Aorta (tissue), 5 donors: ENCODE measurements at regions of chr10 and their contacts with region 1.

Region 1: DNA sequence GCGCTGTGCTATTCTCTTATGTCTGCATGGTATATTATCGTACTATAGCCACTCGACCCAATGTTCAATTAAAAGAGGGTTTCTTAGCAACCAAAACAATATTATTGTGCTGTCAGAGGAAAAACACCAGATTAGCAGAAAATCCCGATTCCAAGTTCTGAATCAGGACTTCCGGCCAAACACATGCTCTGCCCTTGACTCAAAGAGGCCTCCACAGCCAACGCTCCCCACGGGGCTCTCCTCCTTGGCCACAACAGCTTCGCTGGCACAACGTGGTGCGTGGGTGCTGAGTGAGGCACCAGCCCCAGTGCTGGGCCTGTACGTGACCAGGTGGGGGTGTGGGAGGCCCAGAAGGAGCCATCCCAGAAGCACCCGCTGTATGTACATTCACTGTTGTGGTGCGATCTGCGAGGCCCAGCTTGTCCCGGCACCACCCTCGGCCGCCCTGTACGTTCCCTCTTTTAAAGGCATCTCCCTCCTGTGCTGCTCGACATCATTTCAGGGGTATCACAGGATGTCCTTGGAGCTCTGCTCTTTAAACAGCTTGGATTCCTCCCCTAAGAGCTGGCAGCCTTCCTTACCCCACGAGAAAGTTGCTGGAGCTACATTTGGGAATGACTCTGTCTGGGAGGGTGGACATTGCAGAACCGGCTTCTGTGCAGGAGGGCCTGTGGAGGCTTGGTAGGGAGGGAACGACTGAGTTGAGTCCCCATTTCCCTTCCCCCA is 736.2 kb downstream of the PARD3 start:
- DNase-seq: peak; percentile 92 to 96
- ATAC-seq: peak; percentile 87
- H3K4me3 ChIP-seq: no peak overlapping the region
- H3K27ac ChIP-seq: peak overlapping the region in 1 of 2 donors; percentile 73
- H3K4me1 ChIP-seq: peaks cover 0 to 2% of the 10 kb centered on the region in 2 donors
- H3K27me3 ChIP-seq: no peaks in the 10 kb centered on the region

Region 2: GRCh38 chr10:34010891-34011290 is 68.0 kb before region 1 on chr10:
- intact Hi-C with region 1: no loop called
- DNase-seq: no peak
- ATAC-seq: no peak
- H3K4me3 ChIP-seq: no peak overlapping the region
- H3K27ac ChIP-seq: no peak overlapping the region
- H3K4me1 ChIP-seq: no peaks in the 10 kb centered on the region
- H3K27me3 ChIP-seq: no peaks in the 10 kb centered on the region

Region 3: GRCh38 chr10:34139559-34139958 is 60.7 kb after region 1 on chr10:
- intact Hi-C with region 1: no loop called
- DNase-seq: no peak
- ATAC-seq: no peak
- H3K4me3 ChIP-seq: no peak overlapping the region
- H3K27ac ChIP-seq: no peak overlapping the region
- H3K4me1 ChIP-seq: no peaks in the 10 kb centered on the region
- H3K27me3 ChIP-seq: no peaks in the 10 kb centered on the region

Region 4: GRCh38 chr10:34150103-34150502 is 71.2 kb after region 1 on chr10:
- intact Hi-C with region 1: no loop called
- DNase-seq: no peak
- ATAC-seq: no peak
- H3K4me3 ChIP-seq: no peak overlapping the region
- H3K27ac ChIP-seq: no peak overlapping the region
- H3K4me1 ChIP-seq: peaks cover 4% of the 10 kb centered on the region in 2 donors
- H3K27me3 ChIP-seq: no peaks in the 10 kb centered on the region

Region 5: DNA sequence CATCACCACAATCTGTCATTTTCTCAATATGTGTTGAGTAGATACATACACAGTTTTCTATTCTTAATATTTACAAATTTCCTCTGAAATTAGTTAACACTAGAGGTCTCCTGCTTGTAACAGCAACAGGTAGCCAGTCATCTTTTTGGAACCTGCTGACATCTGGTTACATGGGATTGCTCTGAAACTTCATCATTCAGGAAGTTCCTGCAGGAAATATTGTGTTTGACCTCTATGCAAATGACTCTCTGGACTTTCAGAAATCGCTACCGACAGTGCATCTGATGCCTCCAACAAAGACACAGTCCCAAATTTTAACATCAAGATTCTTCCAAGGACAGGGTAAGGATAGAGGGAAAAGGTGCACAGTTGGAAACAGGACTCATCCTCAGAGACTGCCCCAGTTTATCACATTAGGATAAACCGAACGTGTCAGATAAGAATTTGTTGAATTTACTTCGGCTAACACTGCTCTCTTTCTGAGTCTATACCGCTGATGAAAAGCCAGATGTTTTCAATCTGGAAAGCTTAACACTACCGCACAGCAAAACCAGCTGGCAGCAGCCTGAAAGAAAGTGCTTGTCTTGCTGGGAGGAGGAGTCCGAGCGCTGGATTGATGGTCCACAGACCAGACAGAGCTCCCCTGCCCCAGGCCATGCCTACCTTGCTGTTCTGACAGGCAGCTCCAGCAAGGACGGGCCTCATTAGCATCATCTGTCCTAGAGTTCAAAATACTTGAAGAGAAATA is 102.8 kb after region 1 on chr10:
- intact Hi-C with region 1: no loop called
- DNase-seq: no peak
- ATAC-seq: no peak
- H3K4me3 ChIP-seq: no peak overlapping the region
- H3K27ac ChIP-seq: no peak overlapping the region
- H3K4me1 ChIP-seq: no peaks in the 10 kb centered on the region
- H3K27me3 ChIP-seq: no peaks in the 10 kb centered on the region

Region 6: DNA sequence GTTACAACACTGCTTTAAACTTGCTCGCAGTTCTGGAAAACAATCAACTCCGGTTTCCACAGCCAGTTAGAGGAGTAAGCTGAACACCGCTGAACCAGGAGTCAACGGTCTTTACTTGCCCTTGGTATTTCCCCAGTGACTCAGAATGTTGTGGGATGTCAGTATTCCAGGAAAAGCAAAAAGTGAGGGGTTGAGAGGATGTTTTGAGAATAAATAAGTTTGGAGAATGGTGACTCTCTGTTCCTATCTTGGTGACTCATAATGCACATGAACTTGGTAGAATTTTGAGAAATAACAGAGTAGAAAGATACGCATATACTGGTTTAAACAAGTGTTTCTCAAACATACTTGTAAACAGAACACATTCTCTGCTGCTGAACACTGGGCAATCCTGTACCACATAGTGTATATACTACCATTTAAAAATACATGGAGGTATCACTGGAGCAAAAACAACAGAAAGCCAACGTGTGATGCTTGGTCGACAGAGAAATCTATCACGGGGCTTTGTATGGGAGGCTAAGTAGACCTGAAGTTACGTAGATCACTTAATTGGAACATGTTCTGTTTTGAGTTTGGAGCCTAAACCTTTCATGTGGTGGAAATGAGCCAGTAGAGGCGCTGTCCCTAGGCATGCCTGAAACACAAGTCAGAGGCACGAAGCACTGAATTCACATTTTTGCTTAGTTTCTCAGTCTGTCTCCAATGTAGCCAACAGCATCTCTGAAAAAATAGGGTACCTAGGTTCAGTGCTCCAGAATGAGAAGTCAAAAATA is 201.9 kb after region 1 on chr10:
- intact Hi-C with region 1: loop called in 1 of 2 experiments (anchors 5 kb)
- DNase-seq: peak in 1 of 2 donors; percentile 74
- ATAC-seq: peak; percentile 68
- H3K4me3 ChIP-seq: peak overlapping the region; percentile 18 to 20
- H3K27ac ChIP-seq: peak overlapping the region; percentile 45 to 99
- H3K4me1 ChIP-seq: no peaks in the 10 kb centered on the region
- H3K27me3 ChIP-seq: no peaks in the 10 kb centered on the region